ENCODE measurements at regions of chr6 and their contacts with region 1.

Region 1: GRCh38 chr6:142913511-142914047 is 31.4 kb downstream of the HIVEP2 start:
- DNase-seq: peak; percentile 84
- H3K4me3 Mint-ChIP-seq: peak overlapping the region; percentile 72
- H3K27ac Mint-ChIP-seq: peak overlapping the region; percentile 94
- H3K4me1 Mint-ChIP-seq: peaks cover 80% of the 10 kb centered on the region
- H3K27me3 Mint-ChIP-seq: no peaks in the 10 kb centered on the region

Region 2: GRCh38 chr6:142845624-142846458 is 67.7 kb before region 1 on chr6:
- CTCF ChIA-PET with region 1: interaction called, 8 read pairs
- POLR2A ChIA-PET with region 1: interaction called, 14 read pairs
- intact Hi-C with region 1: loop called (anchors 1 kb)
- DNase-seq: peak; percentile 65
- H3K4me3 Mint-ChIP-seq: peak overlapping the region; percentile 72
- H3K27ac Mint-ChIP-seq: peak overlapping the region; percentile 88
- H3K4me1 Mint-ChIP-seq: peaks cover 96% of the 10 kb centered on the region
- H3K27me3 Mint-ChIP-seq: no peaks in the 10 kb centered on the region

Region 3: DNA sequence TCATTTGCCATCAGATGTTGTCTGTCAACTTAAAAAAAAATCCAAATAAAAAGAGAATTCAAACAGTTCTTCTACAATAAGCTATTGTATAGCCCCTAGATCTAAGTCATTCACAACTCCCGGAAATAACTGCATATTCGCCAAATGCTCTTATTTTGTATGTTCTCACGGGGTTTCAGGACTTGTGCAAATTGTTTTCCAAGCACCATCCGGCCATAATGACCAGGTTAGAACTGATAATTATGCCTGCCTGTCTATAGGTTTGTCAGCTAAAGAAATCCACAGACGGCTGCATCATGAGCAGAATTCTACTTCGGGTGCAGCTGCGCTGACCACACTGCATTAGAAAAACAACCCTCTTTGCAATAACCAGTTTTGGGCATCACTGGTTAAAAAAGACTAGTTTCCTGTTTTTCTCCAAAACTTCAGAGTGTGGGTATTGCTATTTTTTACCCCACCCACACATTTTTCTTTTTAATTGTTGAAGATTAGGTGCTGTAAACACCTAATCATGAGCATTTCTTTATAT is 56.3 kb before region 1 on chr6:
- CTCF ChIA-PET with region 1: interaction called, 3 read pairs
- POLR2A ChIA-PET with region 1: interaction called, 5 read pairs
- intact Hi-C with region 1: loop called (anchors 1 kb)
- DNase-seq: no peak
- H3K4me3 Mint-ChIP-seq: peak overlapping the region; percentile 66
- H3K27ac Mint-ChIP-seq: peak overlapping the region; percentile 92
- H3K4me1 Mint-ChIP-seq: peaks cover 92% of the 10 kb centered on the region
- H3K27me3 Mint-ChIP-seq: no peaks in the 10 kb centered on the region

Region 4: DNA sequence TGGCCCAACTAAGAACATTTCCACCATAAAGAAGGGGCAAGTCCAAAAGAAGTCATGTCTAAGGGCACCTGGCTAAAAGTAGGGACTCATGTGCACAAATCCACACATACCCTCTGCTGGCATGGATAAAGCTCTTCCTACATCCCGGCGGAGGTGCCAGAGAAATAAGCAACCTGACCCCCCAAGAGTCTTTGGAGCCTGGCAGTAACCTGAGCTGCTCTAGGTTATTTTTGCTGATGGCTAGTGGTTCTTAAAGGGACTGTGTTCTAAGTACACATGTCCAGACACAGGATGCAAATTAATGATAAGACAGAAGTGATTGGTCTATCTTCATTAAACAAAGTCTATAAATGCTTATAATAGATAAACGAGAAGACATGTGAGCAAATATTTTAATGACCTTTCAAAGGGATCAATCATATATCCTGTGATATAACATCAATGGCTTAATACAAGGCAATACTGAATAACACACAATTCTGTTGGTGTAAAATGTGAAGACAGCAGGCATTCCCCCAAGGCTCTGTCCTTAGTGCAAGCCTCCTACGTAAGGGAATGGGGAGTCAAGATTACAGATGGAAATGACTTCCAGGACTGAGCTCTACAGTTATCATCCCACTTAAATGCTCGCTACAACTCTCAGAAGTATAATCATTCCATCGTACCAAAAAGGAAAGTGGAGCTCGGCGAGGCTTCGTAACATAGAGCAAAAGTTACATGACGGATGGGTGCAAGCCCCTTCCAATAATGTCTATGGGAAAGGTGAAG is 21.1 kb before region 1 on chr6:
- CTCF ChIA-PET with region 1: no interaction called
- POLR2A ChIA-PET with region 1: no interaction called
- intact Hi-C with region 1: no loop called
- DNase-seq: no peak
- H3K4me3 Mint-ChIP-seq: no peak overlapping the region
- H3K27ac Mint-ChIP-seq: no peak overlapping the region
- H3K4me1 Mint-ChIP-seq: peaks cover 70% of the 10 kb centered on the region
- H3K27me3 Mint-ChIP-seq: no peaks in the 10 kb centered on the region

Region 5: DNA sequence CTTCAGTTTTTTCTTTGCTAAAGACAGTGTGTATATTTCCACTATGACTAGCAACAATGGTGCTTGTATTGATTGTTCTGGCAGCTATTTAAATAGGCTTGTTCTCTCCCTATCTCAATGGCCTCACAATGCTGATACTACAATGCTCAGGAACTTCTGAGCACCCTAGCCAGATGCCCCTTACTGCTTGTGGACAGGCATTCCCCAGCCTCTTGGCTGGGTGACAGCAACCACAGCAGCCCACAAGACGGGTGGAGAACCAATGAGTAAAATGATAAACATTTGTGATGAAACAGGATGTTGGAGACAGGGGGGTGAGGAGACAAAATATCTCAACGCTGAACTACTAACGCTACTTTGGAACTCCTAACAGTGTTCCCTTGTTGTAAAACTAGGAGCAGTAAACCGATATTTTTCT is 10.9 kb before region 1 on chr6:
- CTCF ChIA-PET with region 1: interaction called, 7 read pairs
- POLR2A ChIA-PET with region 1: interaction called, 4 read pairs
- intact Hi-C with region 1: loop called (anchors 1 kb)
- DNase-seq: peak; percentile 87
- H3K4me3 Mint-ChIP-seq: peak overlapping the region; percentile 56
- H3K27ac Mint-ChIP-seq: peak overlapping the region; percentile 87
- H3K4me1 Mint-ChIP-seq: peaks cover 59% of the 10 kb centered on the region
- H3K27me3 Mint-ChIP-seq: no peaks in the 10 kb centered on the region